ENCODE measurements at regions of chr14 and their contacts with region 1.

Region 1: GRCh38 chr14:23631702-23632460 is 4.3 kb upstream of the DHRS2 start:
- DNase-seq: peak; percentile 65
- ATAC-seq: peak; percentile 90
- H3K4me3 ChIP-seq: no peak overlapping the region
- H3K27ac ChIP-seq: peak overlapping the region; percentile 29; the same call in 1 of the 2 replicates
- H3K4me1 ChIP-seq: peaks cover 6% of the 10 kb centered on the region in 2 experiments; a peak in 3 of 4 replicates
- H3K27me3 ChIP-seq: no peaks in the 10 kb centered on the region
- CTCF ChIP-seq: peak; percentile 64 to 98 (median 95)
- POLR2A ChIP-seq: no peak
- RAD21 ChIP-seq: peak; percentile 79

Region 2: DNA sequence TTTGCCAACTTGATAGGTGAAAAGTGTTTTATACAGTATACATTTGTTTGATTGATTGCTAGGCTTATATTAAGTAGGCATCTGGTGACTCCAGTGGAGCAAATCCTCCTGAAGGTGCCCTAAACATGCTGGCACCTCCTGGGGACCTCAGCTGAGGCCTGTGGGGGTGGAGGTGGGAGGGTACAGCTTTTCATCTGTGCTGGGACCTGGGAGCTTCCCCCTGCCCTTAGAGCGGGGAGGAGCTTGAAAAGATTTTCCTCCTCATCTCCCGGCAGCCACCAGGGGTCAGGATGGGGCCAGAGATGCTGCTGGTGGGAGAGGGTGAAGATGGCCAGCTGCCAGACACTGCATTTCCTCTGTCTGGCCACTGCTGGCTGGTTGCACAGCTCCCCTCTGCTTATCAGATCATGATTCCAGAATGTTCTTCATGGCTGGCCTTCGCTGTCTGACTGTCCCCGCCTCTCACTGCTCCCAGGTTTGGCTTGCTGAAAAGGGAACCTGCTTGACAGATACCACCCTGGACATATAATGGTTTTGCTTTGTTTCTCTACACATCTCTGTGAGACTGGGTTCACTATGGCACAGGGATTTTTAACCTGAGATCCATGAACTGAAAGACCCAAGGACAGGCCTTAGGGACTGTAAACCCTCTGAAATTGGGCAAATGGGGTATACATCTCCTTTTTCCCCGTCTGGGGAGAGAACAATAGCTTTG is 42.8 kb before region 1 on chr14:
- CTCF ChIA-PET with region 1: interaction called, 27 read pairs
- POLR2A ChIA-PET with region 1: interaction called, 7 read pairs
- RAD21 ChIA-PET with region 1: interaction called, 3 to 4 read pairs
- intact Hi-C with region 1: no loop called
- DNase-seq: peak; percentile 81
- ATAC-seq: peak; percentile 99
- H3K4me3 ChIP-seq: no peak overlapping the region
- H3K27ac ChIP-seq: 0 out of 2 replicates have a peak overlapping the region, but pooled peaks have one; percentile 16
- H3K4me1 ChIP-seq: peaks cover 4 to 12% of the 10 kb centered on the region in 2 experiments; a peak in 3 of 4 replicates
- H3K27me3 ChIP-seq: no peaks in the 10 kb centered on the region
- CTCF ChIP-seq: peak; percentile 84 to 95 (median 90)
- POLR2A ChIP-seq: no peak
- RAD21 ChIP-seq: peak; percentile 86

Region 3: GRCh38 chr14:23621204-23621931 is 10.5 kb before region 1 on chr14:
- CTCF ChIA-PET with region 1: interaction called, 10 read pairs
- POLR2A ChIA-PET with region 1: no interaction called
- RAD21 ChIA-PET with region 1: no interaction called
- intact Hi-C with region 1: no loop called
- DNase-seq: no peak
- ATAC-seq: no peak
- H3K4me3 ChIP-seq: no peak overlapping the region
- H3K27ac ChIP-seq: no peak overlapping the region
- H3K4me1 ChIP-seq: no peaks in the 10 kb centered on the region
- H3K27me3 ChIP-seq: no peaks in the 10 kb centered on the region
- CTCF ChIP-seq: no peak
- POLR2A ChIP-seq: no peak
- RAD21 ChIP-seq: no peak

Region 4: DNA sequence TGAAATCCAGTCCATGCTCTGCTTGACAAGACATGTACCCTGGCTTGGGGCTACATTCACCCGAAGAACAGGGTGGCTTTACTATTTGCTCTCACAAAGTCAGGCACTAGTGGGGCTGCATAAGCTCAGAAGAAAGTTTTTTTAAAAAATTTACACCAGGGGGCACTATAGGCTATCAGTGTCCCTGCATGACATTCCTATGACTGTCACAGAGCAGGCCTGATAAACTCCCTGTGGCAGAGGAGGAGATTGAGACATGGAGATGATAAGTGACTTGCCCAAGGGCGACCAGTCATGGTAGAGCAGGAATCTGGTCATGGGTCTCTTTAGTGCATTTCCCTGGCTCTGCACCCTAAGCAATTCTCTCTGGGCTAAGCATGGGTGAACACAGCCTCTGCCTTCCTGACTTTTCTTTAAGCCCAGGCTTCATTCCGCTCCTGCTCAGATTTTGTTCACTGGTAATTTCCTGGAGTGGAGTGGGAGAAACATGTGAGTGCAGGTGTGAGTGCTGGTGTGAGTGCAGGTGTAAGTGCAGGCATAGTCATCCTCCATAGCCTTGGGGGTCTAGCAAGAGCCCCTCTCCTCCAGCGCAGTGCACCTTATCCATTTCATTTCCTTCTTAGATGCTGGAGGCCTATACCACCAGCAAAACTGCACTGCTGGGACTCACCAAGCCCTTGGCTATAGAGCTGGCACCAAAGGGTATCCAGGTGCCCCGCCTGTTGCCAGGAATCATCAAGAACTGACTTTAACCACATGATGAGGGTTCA is 95.9 kb after region 1 on chr14:
- CTCF ChIA-PET with region 1: no interaction called
- POLR2A ChIA-PET with region 1: no interaction called
- RAD21 ChIA-PET with region 1: no interaction called
- intact Hi-C with region 1: loop called (anchors 2 kb)
- DNase-seq: peak; percentile 56
- ATAC-seq: peak; percentile 95
- H3K4me3 ChIP-seq: no peak overlapping the region
- H3K27ac ChIP-seq: no peak overlapping the region
- H3K4me1 ChIP-seq: peaks cover 0 to 4% of the 10 kb centered on the region in 2 experiments; a peak in 1 of 4 replicates
- H3K27me3 ChIP-seq: no peaks in the 10 kb centered on the region
- CTCF ChIP-seq: peak; percentile 43 to 62 (median 58); a peak in 4 of 6 replicates
- POLR2A ChIP-seq: no peak
- RAD21 ChIP-seq: peak; percentile 71

Region 5: GRCh38 chr14:23910101-23910875 is 278.4 kb after region 1 on chr14:
- CTCF ChIA-PET with region 1: interaction called, 63 read pairs
- POLR2A ChIA-PET with region 1: interaction called, 5 read pairs
- RAD21 ChIA-PET with region 1: interaction called, 14 to 16 read pairs
- intact Hi-C with region 1: loop called (anchors 5 kb)
- DNase-seq: peak; percentile 38
- ATAC-seq: peak; percentile 98
- H3K4me3 ChIP-seq: no peak overlapping the region
- H3K27ac ChIP-seq: no peak overlapping the region
- H3K4me1 ChIP-seq: no peaks in the 10 kb centered on the region
- H3K27me3 ChIP-seq: no peaks in the 10 kb centered on the region
- CTCF ChIP-seq: peak; percentile 83 to 93 (median 85)
- POLR2A ChIP-seq: no peak
- RAD21 ChIP-seq: peak; percentile 85

Region 6: DNA sequence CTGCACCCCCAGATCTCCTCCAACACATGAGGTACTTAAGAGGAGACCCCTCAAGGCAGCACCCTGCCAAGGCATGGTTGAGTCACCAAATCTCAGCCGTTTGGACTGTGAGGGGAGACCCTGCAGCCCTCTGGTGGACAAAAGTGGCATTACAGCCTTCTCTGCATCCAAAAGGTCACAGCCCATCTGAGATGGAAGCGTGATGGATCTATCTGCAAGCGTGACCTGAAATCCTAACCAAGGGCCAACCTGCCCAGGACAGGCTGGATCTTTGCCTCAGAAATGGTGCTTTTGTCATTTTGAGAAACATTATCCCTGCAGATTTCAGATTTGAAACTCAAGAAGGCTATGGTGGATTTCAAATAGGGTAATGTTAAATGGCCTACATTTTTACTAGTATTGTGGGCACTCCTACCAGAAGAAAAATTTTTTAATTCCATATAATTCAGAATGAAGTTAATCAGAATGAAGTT is 298.0 kb after region 1 on chr14:
- CTCF ChIA-PET with region 1: interaction called, 11 read pairs
- POLR2A ChIA-PET with region 1: no interaction called
- RAD21 ChIA-PET with region 1: interaction called in 1 of 2 experiments, 3 read pairs
- intact Hi-C with region 1: loop called (anchors 2 kb)
- DNase-seq: peak; percentile 59
- ATAC-seq: peak; percentile 99
- H3K4me3 ChIP-seq: no peak overlapping the region
- H3K27ac ChIP-seq: no peak overlapping the region
- H3K4me1 ChIP-seq: no peaks in the 10 kb centered on the region
- H3K27me3 ChIP-seq: no peaks in the 10 kb centered on the region
- CTCF ChIP-seq: peak; percentile 80 to 97 (median 95)
- POLR2A ChIP-seq: no peak
- RAD21 ChIP-seq: peak; percentile 69

Region 7: DNA sequence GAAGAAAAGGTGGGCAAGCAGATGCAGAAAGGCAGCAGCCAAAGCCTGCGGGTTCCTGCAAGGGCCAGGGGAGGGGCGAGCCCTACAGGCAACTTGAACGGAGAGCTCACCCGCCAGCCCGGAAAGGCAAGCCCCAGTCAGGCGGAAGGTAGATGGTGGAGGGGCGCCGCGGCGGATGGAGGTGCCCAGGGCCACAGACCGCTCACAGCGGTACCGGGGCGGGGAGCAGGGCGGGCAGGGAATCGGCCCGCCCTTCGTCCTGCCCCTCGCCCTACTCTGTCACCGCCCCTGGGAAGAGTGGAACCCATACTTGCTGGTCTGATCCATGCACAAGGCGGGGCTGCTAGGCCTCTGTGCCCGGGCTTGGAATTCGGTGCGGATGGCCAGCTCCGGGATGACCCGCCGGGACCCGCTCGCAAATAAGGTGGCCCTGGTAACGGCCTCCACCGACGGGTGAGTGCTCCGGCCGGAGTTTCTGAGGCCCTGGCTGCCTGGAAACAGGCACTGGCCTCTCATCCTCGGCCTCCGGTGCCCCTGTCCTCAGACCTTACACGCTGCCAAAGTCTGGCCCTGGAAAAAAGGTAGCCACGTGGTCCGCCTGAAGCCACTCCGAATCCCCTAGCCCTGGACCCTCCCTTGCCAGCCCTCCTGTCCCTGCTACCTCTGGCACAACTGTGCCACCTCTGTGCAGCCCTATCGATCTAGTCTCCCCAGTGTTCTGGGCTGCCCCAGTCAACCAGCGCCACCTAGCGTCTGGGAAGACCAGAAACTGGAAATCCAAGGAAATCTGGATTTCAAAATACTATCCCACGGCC is 321.8 kb after region 1 on chr14 and contains the start of gene DHRS4:
- CTCF ChIA-PET with region 1: interaction called, 14 read pairs
- POLR2A ChIA-PET with region 1: no interaction called
- RAD21 ChIA-PET with region 1: interaction called in 1 of 2 experiments, 3 read pairs
- intact Hi-C with region 1: loop called (anchors 1 kb)
- DNase-seq: peak; percentile 67
- ATAC-seq: peak; percentile 98
- H3K4me3 ChIP-seq: peak within 1 kb of the TSS; percentile 85 to 87
- H3K27ac ChIP-seq: peak within 1 kb of the TSS; percentile 96
- H3K4me1 ChIP-seq: peaks cover 0 to 9% of the 10 kb centered on the region in 2 experiments; a peak in 2 of 4 replicates
- H3K27me3 ChIP-seq: no peaks in the 10 kb centered on the region
- CTCF ChIP-seq: peak; percentile 63 to 93 (median 92); a peak in 5 of 6 replicates
- POLR2A ChIP-seq: peak; percentile 66
- RAD21 ChIP-seq: peak; percentile 56; the same call in 1 of the 2 replicates
- total RNA-seq, gene DHRS4: 21.8 TPM